Cardiac septum (tissue), 1 donor: ENCODE measurements at regions of chr6 and their contacts with region 1.

Region 1: DNA sequence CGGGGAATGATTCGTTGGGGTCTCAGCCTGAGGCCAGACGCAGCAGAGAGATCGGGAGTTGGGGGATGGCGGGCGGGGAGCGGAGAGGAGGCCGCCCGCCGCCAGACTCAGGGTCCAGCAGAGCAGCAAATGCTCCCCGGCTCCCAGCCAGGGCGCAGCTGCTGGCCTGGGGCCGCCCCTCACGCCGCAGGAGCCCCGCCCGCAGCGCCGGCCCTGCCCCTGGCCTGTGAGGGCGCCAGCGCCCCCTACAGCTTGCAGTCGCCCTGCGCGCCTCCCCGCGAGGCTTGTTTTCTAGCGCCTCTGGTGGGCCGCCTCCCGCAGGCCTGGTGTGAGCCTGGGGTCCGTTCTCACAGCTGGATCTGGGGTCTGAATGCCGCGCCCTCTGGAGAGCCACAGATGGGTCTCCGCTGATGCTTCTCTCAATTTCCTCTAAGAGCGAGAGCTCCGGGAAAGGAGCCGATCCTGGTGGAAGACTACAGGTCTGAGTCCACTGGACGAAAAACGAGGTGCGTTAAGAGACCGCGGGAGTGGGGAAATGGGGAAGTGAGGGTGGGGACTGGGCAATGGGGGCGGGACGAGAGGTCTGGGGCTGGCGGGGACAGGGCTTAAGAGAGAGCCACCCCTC is 29.9 kb downstream of the TRIM38 start:
- DNase-seq: peak; percentile 97

Region 2: GRCh38 chr6:25788305-25788922 is 204.1 kb before region 1 on chr6:
- intact Hi-C with region 1: loop called (anchors 5 kb)
- DNase-seq: no peak

Region 3: GRCh38 chr6:25816252-25816651 is 176.3 kb before region 1 on chr6:
- intact Hi-C with region 1: no loop called
- DNase-seq: no peak

Region 4: GRCh38 chr6:25942561-25943147 is 49.9 kb before region 1 on chr6:
- intact Hi-C with region 1: no loop called
- DNase-seq: no peak

Region 5: DNA sequence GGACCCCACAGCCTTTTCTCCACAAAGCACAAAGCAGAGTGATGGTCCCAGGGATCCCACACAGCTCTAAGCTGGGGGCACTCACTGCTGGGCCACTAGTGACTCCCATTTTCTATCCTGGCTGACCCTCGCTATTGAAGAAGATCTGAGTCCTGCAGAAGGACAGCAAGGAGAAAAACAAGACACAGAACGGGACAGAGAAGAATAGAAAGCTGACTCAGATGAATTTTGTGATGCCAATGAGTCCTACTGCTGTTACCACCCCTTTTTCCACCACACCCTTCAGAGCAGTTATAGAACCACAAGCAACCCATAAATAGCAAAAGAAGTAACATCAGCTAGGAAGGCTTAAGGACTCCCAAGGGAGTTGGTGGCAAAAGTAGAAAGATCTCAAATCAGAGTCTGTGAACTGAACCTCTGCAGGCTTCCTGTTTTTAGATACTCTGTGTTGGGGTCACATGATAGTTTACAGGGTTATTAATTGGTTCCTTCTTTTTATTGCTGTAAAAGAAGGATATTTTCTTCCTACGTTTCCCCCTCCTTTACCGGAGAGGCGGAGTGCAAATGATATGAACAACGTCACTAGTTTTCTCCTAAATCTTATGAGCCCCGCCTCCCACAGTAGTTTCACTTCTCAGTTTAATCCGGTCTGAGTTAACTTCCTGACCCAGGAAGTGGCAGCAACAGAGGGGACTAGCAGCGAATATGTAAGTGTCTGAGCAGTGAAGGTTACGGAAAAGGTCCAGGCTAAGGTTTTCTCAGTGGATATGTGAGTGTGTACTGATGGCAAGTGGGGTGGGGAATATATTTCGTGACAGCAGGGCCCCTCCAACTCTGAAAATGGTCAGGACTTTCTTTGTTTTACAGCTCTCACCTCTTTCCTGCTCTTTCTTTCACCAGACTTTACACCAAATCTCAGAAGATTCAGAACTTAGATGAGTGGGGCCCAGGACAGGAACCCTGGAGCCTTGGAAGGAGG is 30.1 kb before region 1 on chr6 and contains the start of gene TRIM38:
- intact Hi-C with region 1: loop called (anchors 2 kb)
- DNase-seq: no peak
- total RNA-seq, gene TRIM38: 2.5 TPM

Region 6: GRCh38 chr6:26017632-26017966 is 25.1 kb after region 1 on chr6:
- intact Hi-C with region 1: loop called (anchors 1 kb)
- DNase-seq: peak; percentile 81